ENCODE measurements at regions of chr12 and their contacts with region 1.

Region 1: GRCh38 chr12:53213348-53213747 is 6.3 kb upstream of the ITGB7 start:
- H3K4me3 ChIP-seq: no peak overlapping the region
- H3K27ac ChIP-seq: no peak overlapping the region
- H3K4me1 ChIP-seq: no peaks in the 10 kb centered on the region
- CTCF ChIP-seq: peak; percentile 91

Region 2: GRCh38 chr12:53065975-53066931 is 147.1 kb before region 1 on chr12:
- CTCF ChIA-PET with region 1: interaction called, 32 read pairs
- POLR2A ChIA-PET with region 1: interaction called, 3 read pairs
- H3K4me3 ChIP-seq: no peak overlapping the region
- H3K27ac ChIP-seq: no peak overlapping the region
- H3K4me1 ChIP-seq: peaks cover 4% of the 10 kb centered on the region
- CTCF ChIP-seq: peak; percentile 91

Region 3: GRCh38 chr12:53198486-53199110 is 14.8 kb before region 1 on chr12:
- CTCF ChIA-PET with region 1: interaction called, 35 read pairs
- POLR2A ChIA-PET with region 1: no interaction called
- H3K4me3 ChIP-seq: no peak overlapping the region
- H3K27ac ChIP-seq: no peak overlapping the region
- H3K4me1 ChIP-seq: no peaks in the 10 kb centered on the region
- CTCF ChIP-seq: no peak

Region 4: DNA sequence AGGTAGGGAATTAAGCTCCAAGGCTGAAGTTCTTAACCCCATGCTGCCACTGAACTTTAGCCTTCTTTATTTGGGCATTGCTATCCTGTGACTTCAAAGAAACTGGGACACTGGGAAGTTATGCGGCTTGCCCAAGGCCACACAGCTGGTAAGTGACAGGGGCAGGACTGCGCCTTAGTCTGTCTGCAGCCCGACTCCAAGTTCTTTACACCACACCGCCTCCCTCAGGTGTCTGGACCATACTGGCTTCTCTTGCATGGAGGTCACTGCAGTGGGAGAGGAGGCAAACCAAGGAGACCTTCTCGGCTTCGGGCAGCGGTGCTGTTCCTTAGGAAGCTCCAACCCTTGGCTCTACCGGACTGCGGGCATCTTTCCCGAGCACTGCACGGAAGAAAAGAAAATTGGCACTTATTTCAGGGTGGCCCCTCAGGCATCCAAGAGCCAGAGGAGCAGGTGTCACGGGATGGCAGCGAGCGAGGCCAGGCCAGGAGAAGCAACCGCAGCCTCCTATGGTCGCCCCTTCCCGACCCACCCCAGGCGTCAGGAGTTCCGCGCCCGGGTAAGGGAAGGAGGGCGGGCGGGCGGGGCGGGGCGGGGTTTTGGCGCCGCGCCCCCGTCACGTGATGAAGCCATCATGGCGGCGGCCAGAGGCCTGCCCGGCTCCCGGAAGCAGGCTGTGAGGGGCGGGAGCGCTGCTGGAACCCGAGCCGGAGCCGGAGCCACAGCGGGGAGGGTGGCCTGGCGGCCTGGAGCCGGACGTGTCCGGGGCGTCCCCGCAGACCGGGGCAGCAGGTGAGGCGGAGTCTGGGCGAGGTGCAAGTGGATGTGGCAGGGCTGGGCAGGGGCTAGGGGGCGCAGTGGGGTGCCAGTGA is 38.4 kb after region 1 on chr12:
- CTCF ChIA-PET with region 1: interaction called, 53 read pairs
- POLR2A ChIA-PET with region 1: interaction called, 5 read pairs
- H3K4me3 ChIP-seq: peak overlapping the region; percentile 91
- H3K27ac ChIP-seq: peak overlapping the region; percentile 61
- H3K4me1 ChIP-seq: peaks cover 4% of the 10 kb centered on the region; the same call in 1 of the 2 replicates
- CTCF ChIP-seq: peak; percentile 92

Region 5: GRCh38 chr12:53279283-53279869 is 66.0 kb after region 1 on chr12:
- CTCF ChIA-PET with region 1: interaction called, 11 read pairs
- POLR2A ChIA-PET with region 1: interaction called, 4 read pairs
- H3K4me3 ChIP-seq: no peak overlapping the region
- H3K27ac ChIP-seq: no peak overlapping the region
- H3K4me1 ChIP-seq: no peaks in the 10 kb centered on the region
- CTCF ChIP-seq: no peak

Region 6: GRCh38 chr12:53295070-53295890 is 81.9 kb after region 1 on chr12 and contains the start of gene PFDN5:
- CTCF ChIA-PET with region 1: interaction called, 132 read pairs
- POLR2A ChIA-PET with region 1: interaction called, 8 read pairs
- H3K4me3 ChIP-seq: peak within 1 kb of the TSS; percentile 73
- H3K27ac ChIP-seq: peak within 1 kb of the TSS; percentile 61
- H3K4me1 ChIP-seq: peaks cover 4% of the 10 kb centered on the region
- CTCF ChIP-seq: no peak